G401 (cell line): ENCODE measurements at regions of chr5 and their contacts with region 1.

Region 1: GRCh38 chr5:923281-923873 is 30.7 kb downstream of the TRIP13 start:
- DNase-seq: peak; percentile 34

Region 2: GRCh38 chr5:548256-548655 is 375.1 kb before region 1 on chr5:
- in situ Hi-C with region 1: no loop called
- DNase-seq: no peak

Region 3: DNA sequence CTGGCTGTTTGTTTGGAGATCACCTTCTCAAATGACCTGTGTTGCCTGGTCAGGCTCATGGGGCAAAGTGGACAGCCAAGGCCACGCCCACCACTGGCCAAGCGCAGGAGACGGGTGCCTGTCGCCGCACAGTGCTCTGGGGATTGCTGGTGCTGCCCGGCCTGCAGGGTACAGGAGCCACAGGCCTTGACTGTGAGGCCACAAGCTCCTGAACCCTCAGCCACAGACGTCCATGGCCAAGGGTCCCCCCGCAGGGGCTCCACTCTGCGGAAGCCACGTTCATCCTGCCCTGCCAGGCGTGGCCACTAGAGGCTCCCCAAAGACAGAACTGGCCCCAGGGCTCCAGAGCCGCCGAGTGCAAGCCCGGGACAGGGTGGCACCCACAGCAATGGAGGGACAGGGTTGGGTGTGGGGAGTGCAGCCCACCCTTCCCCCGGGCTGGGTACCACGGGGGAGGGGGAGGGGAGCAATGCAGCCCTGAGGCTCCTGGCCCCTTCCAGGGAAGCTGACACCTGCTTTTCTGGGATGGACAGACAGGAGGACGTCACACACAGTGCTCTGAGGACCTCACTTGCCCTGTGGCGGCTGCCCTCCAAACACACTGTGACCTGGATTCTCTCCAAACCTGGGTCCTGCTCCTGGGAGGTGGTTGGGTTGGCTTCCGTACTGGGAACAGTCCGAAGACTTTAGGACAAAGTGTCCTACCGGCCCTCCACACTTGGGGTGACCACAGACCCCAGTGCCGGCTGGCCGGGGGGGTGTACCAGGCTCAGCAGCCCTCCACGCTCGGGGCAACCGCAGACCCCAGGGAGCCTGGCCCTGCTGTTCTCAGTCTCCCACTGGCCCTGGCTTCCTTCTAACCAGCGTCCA is 251.7 kb before region 1 on chr5:
- in situ Hi-C with region 1: loop called (anchors 25 kb)
- DNase-seq: peak; percentile 77